HEK293 (cell line): ENCODE measurements at regions of chr1 and their contacts with region 1.

Region 1: DNA sequence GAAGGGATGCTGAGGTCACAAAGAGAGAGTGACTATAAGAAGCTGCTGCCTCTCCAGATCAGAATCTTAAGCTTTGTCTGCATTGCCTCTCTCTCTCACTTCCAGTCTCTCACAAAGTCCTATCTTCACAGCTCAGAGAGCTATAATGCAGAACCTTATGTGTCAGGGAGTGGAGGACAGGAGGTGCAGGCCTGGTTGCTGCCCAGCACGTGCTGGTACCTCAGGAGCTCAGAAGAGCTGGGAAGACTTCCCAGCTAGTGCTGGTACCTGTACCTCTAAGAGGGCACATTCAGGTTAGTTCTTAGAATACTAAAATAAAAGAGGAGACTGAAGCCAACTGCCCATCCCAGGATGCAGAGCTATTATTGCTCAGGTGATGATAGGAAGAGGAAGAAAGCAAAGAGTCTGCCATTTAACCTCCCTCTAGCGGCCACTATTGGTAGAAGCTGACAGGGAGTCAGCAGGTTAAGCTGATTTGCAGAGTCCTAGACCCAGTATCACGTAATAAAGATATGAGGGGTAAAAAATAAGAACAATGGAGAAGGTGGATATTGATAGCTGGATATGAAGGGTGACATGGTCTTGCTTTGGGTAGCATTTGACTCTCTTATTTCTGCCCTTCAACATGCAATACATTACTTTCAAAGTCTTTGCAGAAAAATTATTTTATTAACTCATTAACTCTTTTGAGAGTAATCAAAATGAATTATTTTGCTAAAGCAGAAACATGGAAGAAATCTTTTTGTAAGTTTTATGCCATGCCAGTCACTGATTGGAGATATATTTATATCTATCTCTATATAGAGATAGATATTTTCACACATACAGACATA is 138.1 kb upstream of the HMCN1 start:
- H3K4me3 ChIP-seq: no peak overlapping the region
- H3K27ac ChIP-seq: no peak overlapping the region
- H3K4me1 ChIP-seq: no peaks in the 10 kb centered on the region
- CTCF ChIP-seq: 0 out of 2 replicates have a peak, but pooled peaks have one; percentile 12

Region 2: GRCh38 chr1:185404291-185404690 is 191.8 kb before region 1 on chr1:
- CTCF ChIA-PET with region 1: no interaction called
- POLR2A ChIA-PET with region 1: no interaction called
- H3K4me3 ChIP-seq: no peak overlapping the region
- H3K27ac ChIP-seq: no peak overlapping the region
- H3K4me1 ChIP-seq: no peaks in the 10 kb centered on the region
- CTCF ChIP-seq: no peak

Region 3: GRCh38 chr1:185526344-185527307 is 69.4 kb before region 1 on chr1:
- CTCF ChIA-PET with region 1: no interaction called
- POLR2A ChIA-PET with region 1: no interaction called
- H3K4me3 ChIP-seq: no peak overlapping the region
- H3K27ac ChIP-seq: no peak overlapping the region
- H3K4me1 ChIP-seq: no peaks in the 10 kb centered on the region
- CTCF ChIP-seq: no peak

Region 4: GRCh38 chr1:185565302-185565701 is 30.7 kb before region 1 on chr1:
- CTCF ChIA-PET with region 1: interaction called, 10 read pairs
- POLR2A ChIA-PET with region 1: no interaction called
- H3K4me3 ChIP-seq: no peak overlapping the region
- H3K27ac ChIP-seq: no peak overlapping the region
- H3K4me1 ChIP-seq: peaks cover 10% of the 10 kb centered on the region; the same call in 1 of the 2 replicates
- CTCF ChIP-seq: no peak

Region 5: DNA sequence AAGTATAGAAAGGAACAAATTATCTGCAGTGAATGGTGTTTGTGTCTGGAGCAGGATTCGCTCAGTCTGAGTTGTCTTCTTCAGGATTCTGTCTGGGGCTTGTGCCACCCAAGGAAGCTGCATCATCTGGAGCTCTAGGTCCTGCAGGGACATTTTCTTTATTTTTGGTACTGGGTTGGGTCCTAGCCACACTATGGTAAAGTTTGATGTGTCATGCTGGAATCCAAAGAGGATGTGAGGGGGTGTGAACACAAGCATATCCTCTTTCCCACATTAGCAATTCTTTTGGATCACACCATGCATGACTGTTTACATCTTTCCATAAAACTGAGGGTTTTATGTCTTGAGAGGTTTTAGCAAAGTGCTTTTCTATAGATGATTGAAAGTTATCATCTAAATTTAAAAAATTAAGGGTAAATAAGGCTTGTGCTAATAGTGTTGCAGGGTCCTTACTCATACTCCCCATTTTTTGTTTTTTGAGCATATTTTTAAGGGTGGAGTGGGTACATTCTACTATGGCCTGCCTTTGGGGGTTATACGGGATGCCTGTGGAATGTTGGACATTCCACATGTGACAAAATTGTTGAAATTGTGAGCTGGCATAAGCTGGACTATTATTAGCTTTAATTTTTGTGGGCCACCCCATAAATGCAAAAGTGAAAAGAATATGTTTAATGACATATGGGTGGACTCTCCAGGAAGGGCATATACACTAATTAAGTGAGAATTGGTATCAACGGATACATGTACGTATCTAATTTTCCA is 13.9 kb before region 1 on chr1:
- CTCF ChIA-PET with region 1: interaction called, 15 read pairs
- POLR2A ChIA-PET with region 1: interaction called, 4 read pairs
- H3K4me3 ChIP-seq: no peak overlapping the region
- H3K27ac ChIP-seq: no peak overlapping the region
- H3K4me1 ChIP-seq: no peaks in the 10 kb centered on the region
- CTCF ChIP-seq: no peak

Region 6: GRCh38 chr1:185627171-185627570 is 31.1 kb after region 1 on chr1:
- CTCF ChIA-PET with region 1: no interaction called
- POLR2A ChIA-PET with region 1: no interaction called
- H3K4me3 ChIP-seq: no peak overlapping the region
- H3K27ac ChIP-seq: no peak overlapping the region
- H3K4me1 ChIP-seq: no peaks in the 10 kb centered on the region
- CTCF ChIP-seq: no peak

Region 7: DNA sequence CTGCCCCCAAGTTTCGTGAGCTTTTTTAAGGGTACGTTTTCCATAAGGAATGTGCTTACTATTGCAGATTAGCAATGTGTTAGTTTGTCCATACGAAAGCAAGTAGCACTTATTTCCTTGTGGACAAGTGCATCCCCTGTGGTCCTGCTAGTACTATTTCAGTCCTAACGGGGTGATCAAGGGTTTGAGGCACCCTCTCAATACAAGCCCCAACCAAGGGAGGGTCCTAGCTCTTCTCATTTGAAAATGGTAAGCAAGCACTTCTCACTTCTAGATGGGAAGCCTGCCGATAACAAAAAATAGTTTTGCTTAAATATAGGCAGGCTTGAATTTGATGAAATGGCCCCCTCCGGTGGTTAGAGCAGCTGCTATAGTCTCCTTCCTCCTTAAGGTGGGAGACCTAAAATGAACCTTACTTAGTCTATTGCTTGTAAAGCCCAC is 74.2 kb after region 1 on chr1:
- CTCF ChIA-PET with region 1: interaction called, 16 read pairs
- POLR2A ChIA-PET with region 1: no interaction called
- H3K4me3 ChIP-seq: no peak overlapping the region
- H3K27ac ChIP-seq: no peak overlapping the region
- H3K4me1 ChIP-seq: 0 out of 2 replicates have a peak, but pooled peaks cover 3% of the 10 kb centered on the region
- CTCF ChIP-seq: peak; percentile 45

Region 8: GRCh38 chr1:185821612-185822385 is 225.7 kb after region 1 on chr1:
- CTCF ChIA-PET with region 1: no interaction called
- POLR2A ChIA-PET with region 1: no interaction called
- H3K4me3 ChIP-seq: no peak overlapping the region
- H3K27ac ChIP-seq: no peak overlapping the region
- H3K4me1 ChIP-seq: no peaks in the 10 kb centered on the region
- CTCF ChIP-seq: no peak